ENCODE measurements at regions of chr17 and their contacts with region 1.

Region 1: DNA sequence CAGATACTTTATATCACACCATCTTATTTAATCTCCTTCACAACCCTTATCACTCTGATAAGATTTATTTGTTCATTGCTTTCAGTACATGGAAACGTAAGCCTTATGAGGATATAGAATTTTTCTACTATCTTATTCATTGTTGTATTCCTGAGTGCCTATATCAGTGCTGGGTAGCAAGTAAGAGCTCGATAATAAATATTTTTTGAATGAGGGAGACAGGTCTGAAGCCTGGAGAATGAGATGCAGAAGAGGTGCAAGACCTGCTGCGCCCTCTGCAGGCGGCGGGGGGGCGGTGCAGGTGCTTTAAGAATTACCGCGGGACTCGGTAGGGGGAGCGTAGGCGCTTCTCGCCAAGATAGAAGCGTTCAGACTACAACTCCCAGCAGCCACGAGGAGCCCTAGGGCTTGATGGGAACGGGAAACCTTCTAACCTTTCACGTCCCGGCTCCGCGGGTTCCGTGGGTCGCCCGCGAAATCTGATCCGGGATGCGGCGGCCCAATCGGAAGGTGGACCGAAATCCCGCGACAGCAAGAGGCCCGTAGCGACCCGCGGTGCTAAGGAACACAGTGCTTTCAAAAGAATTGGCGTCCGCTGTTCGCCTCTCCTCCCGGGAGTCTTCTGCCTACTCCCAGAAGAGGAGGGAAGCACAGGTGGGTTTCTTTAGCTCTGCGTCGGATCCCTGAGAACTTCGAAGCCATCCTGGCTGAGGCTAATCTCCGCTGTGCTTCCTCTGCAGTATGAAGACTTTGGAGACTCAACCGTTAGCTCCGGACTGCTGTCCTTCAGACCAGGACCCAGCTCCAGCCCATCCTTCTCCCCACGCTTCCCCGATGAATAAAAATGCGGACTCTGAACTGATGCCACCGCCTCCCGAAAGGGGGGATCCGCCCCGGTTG is at the start of gene WRAP53:
- DNase-seq: peak; percentile 91
- ATAC-seq: peak; percentile 77
- H3K4me3 Mint-ChIP-seq: peak within 1 kb of the TSS; percentile 97
- H3K27ac Mint-ChIP-seq: peak within 1 kb of the TSS; percentile 99
- H3K4me1 Mint-ChIP-seq: peaks cover 49% of the 10 kb centered on the region
- H3K27me3 Mint-ChIP-seq: no peaks in the 10 kb centered on the region
- CTCF ChIP-seq: peak; percentile 94
- total RNA-seq, gene WRAP53: 17.1 and 17.6 TPM in 2 replicates

Region 2: GRCh38 chr17:7280519-7281429 is 407.4 kb before region 1 on chr17:
- CTCF ChIA-PET with region 1: interaction called, 4 read pairs
- POLR2A ChIA-PET with region 1: interaction called, 4 read pairs
- intact Hi-C with region 1: loop called (anchors 1 kb)
- DNase-seq: peak; percentile 82
- ATAC-seq: peak; percentile 83
- H3K4me3 Mint-ChIP-seq: peak overlapping the region; percentile 82
- H3K27ac Mint-ChIP-seq: peak overlapping the region; percentile 77
- H3K4me1 Mint-ChIP-seq: peaks cover 14% of the 10 kb centered on the region
- H3K27me3 Mint-ChIP-seq: peaks cover 12% of the 10 kb centered on the region
- CTCF ChIP-seq: peak; percentile 42

Region 3: DNA sequence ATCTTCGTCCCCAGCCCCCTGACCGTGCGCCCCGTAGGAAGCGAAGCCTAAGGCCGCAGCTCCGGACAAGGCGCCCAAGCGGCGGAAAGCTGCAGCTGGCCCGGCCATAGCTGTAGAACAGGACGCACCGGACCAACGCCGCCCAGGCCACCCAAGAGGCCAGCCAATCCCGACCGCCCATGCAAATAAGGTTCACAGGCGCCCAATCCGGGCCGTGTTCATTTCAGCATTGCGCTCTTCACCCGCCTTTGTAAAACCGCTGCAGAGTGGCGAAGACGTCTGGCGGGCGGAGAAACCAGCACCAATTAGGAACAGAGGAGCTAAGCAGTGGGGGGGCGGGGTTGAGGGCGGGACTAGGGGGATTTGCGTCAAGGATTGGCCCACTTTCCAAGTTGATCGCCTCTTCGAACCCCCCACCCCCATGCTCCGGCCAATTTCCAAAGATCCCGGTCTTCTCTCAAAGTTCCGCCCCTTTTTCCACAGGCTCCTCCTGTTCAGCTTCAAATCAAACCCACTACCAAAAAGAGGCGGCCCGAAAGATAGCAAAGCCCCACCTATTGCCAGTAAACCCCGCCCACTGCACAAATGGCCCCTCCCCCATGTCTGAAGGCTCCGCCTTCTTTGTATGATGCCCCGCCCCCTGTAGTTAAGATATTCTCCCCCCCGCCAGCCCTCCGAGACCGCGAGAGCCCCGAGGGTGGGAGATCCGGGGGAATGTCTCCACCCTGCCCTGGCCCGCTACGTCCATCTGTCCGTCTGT is 284.0 kb before region 1 on chr17 and contains the start of gene TMEM256:
- CTCF ChIA-PET with region 1: no interaction called
- POLR2A ChIA-PET with region 1: interaction called, 18 read pairs
- intact Hi-C with region 1: no loop called
- DNase-seq: peak; percentile 82
- ATAC-seq: peak; percentile 89
- H3K4me3 Mint-ChIP-seq: peak within 1 kb of the TSS; percentile 97
- H3K27ac Mint-ChIP-seq: peak within 1 kb of the TSS; percentile 94
- H3K4me1 Mint-ChIP-seq: peaks cover 16% of the 10 kb centered on the region
- H3K27me3 Mint-ChIP-seq: peaks cover 12% of the 10 kb centered on the region
- CTCF ChIP-seq: no peak
- total RNA-seq, gene TMEM256: 98.2 and 117 TPM in 2 replicates

Region 4: GRCh38 chr17:7561028-7561575 is 127.1 kb before region 1 on chr17:
- CTCF ChIA-PET with region 1: interaction called, 17 read pairs
- POLR2A ChIA-PET with region 1: interaction called, 27 read pairs
- intact Hi-C with region 1: loop called (anchors 1 kb)
- DNase-seq: peak; percentile 76
- ATAC-seq: peak; percentile 68
- H3K4me3 Mint-ChIP-seq: peak overlapping the region; percentile 92
- H3K27ac Mint-ChIP-seq: peak overlapping the region; percentile 96
- H3K4me1 Mint-ChIP-seq: peaks cover 60% of the 10 kb centered on the region
- H3K27me3 Mint-ChIP-seq: no peaks in the 10 kb centered on the region
- CTCF ChIP-seq: no peak

Region 5: DNA sequence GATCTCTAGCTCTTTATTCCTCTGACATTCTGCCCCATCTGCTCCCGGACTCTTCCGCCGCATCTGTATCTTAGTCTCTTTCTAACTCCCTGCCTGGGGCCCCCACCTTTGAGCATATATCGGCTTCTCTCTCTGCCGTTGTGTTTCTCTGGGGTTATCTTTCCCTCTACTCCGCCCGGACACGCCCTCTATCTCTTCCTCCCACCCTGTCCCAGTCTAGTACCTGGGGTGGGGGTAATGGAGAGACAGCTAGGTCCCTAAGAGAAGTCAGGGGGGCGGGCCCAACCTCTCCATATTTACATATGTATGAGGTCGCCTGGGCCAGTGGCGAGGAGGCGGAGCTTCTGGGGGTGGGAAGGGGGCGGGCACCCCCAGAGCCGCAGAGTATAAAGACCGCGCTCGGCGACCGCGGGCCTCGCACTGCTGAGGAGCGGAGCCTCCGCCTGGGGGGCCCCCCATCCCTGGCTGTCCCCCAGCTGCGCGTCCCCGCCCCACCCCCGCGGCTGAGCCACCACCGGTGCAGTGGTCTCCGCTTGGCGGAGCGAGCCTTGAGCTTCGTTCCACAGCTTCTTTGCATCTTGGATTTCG is 37.6 kb before region 1 on chr17 and contains the start of gene ATP1B2:
- CTCF ChIA-PET with region 1: interaction called, 8 read pairs
- POLR2A ChIA-PET with region 1: interaction called, 46 read pairs
- intact Hi-C with region 1: loop called (anchors 1 kb)
- DNase-seq: peak; percentile 55
- ATAC-seq: peak; percentile 85
- H3K4me3 Mint-ChIP-seq: peak within 1 kb of the TSS; percentile 84
- H3K27ac Mint-ChIP-seq: no peak within 1 kb of the TSS
- H3K4me1 Mint-ChIP-seq: peaks cover 23% of the 10 kb centered on the region
- H3K27me3 Mint-ChIP-seq: peaks cover 42% of the 10 kb centered on the region
- CTCF ChIP-seq: no peak
- total RNA-seq, gene ATP1B2: not detected in 2 replicates

Region 6: DNA sequence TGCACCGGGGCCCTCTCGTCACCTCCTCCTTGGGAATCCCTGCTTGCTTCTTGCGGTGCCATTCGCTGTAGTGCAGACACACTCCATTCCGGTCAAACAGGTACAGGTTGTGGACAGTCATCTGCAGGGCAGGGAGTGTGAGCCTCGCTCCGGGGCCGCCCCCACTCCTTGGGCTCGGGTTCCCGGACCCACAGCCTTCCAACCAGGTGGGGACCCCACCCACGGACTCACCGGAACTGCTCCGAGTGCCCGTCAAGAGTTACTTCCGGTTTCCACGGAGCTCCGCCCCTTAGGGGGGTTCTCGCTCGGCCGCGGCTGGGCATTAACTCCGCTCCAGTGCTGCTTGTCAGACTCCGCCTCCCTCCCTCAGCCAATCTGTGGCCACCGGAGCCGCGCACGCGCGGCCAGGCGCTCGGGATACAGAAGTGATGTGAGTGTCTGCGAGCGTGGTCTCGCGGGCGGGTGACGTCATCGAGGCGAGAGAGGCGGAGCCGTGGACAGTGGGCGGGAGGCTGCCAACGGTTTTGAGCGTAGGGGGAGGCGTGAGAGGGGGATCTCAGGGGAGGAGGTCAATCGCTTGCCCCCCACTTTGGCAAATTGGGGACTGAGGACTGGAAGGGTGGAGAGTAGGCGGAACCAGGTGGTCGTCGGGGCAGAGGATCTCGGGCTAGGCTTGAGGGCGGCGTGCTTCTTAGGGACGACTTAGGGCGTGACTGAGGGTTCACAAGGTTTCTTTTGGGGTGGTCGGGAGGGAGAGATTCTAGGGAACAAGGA is 243.7 kb after region 1 on chr17 and contains the starts of genes CNTROB and TRAPPC1:
- CTCF ChIA-PET with region 1: interaction called, 8 read pairs
- POLR2A ChIA-PET with region 1: interaction called, 15 read pairs
- intact Hi-C with region 1: loop called (anchors 1 kb)
- DNase-seq: peak; percentile 99
- ATAC-seq: peak; percentile 96
- H3K4me3 Mint-ChIP-seq: peak within 1 kb of the TSS; percentile 97
- H3K27ac Mint-ChIP-seq: peak within 1 kb of the TSS; percentile 92
- H3K4me1 Mint-ChIP-seq: peaks cover 48% of the 10 kb centered on the region
- H3K27me3 Mint-ChIP-seq: no peaks in the 10 kb centered on the region
- CTCF ChIP-seq: no peak
- total RNA-seq, gene CNTROB: 23.0 and 24.6 TPM in 2 replicates
- total RNA-seq, gene TRAPPC1: 129 and 167 TPM in 2 replicates

Region 7: GRCh38 chr17:8248751-8249607 is 560.8 kb after region 1 on chr17 and contains the start of gene PFAS:
- CTCF ChIA-PET with region 1: no interaction called
- POLR2A ChIA-PET with region 1: interaction called, 19 read pairs
- intact Hi-C with region 1: no loop called
- DNase-seq: peak; percentile 99
- ATAC-seq: peak; percentile 47
- H3K4me3 Mint-ChIP-seq: peak within 1 kb of the TSS; percentile 99
- H3K27ac Mint-ChIP-seq: peak within 1 kb of the TSS; percentile 99
- H3K4me1 Mint-ChIP-seq: peaks cover 43% of the 10 kb centered on the region
- H3K27me3 Mint-ChIP-seq: no peaks in the 10 kb centered on the region
- CTCF ChIP-seq: no peak
- total RNA-seq, gene PFAS: 121 and 126 TPM in 2 replicates

Region 8: GRCh38 chr17:9658593-9659211 is 1970.5 kb after region 1 on chr17:
- CTCF ChIA-PET with region 1: no interaction called
- POLR2A ChIA-PET with region 1: no interaction called
- intact Hi-C with region 1: no loop called
- DNase-seq: no peak
- ATAC-seq: no peak
- H3K4me3 Mint-ChIP-seq: no peak overlapping the region
- H3K27ac Mint-ChIP-seq: no peak overlapping the region
- H3K4me1 Mint-ChIP-seq: no peaks in the 10 kb centered on the region
- H3K27me3 Mint-ChIP-seq: peaks cover 2% of the 10 kb centered on the region
- CTCF ChIP-seq: no peak

Measured in activated B cell treated with CpG ODN at 0.5 μM for 24 hours (primary cell).